A673 (cell line): ENCODE measurements at regions of chr7 and their contacts with region 1.

Region 1: DNA sequence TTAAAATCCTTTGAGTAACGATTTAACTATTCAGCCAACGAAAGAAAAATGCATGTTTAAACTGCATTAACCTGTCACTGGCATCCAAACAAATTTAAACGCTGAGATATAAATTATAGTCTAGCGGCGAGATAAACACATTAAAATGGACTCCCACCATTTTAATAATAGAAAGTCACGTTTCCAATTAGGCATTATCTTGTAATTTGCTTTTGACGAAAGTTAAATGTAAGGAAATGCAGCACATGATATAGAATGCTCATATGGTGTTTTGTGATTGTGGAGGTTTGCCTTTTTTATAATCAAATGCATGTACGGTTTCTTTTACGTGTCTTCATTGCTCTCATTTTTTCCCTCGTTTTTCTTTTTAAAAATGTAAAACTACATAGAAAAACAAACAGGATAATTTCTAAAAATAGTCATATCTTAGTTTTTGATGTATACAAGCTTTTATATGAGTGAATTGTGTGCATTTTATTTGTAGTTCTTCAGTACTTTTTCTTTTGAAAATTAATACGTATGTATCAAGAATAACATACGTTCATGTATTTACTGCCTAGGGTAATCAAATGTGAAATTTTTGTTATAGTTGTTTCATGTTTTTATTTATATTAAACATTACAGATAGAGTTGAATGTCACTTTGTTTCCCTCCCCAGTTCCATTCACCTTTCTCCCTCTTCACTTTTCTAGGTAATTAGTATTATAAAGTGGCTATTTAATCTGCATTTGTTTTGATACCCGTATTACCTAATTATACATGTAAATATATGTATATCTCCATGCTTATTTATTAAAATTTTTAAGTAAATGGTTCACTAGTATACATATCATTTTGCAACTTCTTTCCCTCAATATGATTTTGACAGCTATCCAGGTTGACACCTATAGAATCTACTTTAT is 1.1 kb upstream of the KLF14 start:
- DNase-seq: no peak
- H3K4me3 ChIP-seq: peak overlapping the region; percentile 49
- H3K27ac ChIP-seq: no peak overlapping the region
- H3K4me1 ChIP-seq: peaks cover 5% of the 10 kb centered on the region
- H3K27me3 ChIP-seq: peaks cover 87% of the 10 kb centered on the region
- CTCF ChIP-seq: no peak

Region 2: GRCh38 chr7:130695840-130696239 is 39.2 kb before region 1 on chr7:
- CTCF ChIA-PET with region 1: no interaction called
- POLR2A ChIA-PET with region 1: interaction called, 17 read pairs
- intact Hi-C with region 1: no loop called
- DNase-seq: peak; percentile 68
- H3K4me3 ChIP-seq: no peak overlapping the region
- H3K27ac ChIP-seq: no peak overlapping the region
- H3K4me1 ChIP-seq: no peaks in the 10 kb centered on the region
- H3K27me3 ChIP-seq: no peaks in the 10 kb centered on the region
- CTCF ChIP-seq: peak; percentile 76

Region 3: GRCh38 chr7:131100357-131101054 is 365.4 kb after region 1 on chr7:
- CTCF ChIA-PET with region 1: no interaction called
- POLR2A ChIA-PET with region 1: no interaction called
- intact Hi-C with region 1: no loop called
- DNase-seq: no peak
- H3K4me3 ChIP-seq: no peak overlapping the region
- H3K27ac ChIP-seq: no peak overlapping the region
- H3K4me1 ChIP-seq: peaks cover 8% of the 10 kb centered on the region
- H3K27me3 ChIP-seq: no peaks in the 10 kb centered on the region
- CTCF ChIP-seq: no peak